H1 (cell line): ENCODE measurements at regions of chr20 and their contacts with region 1.

Region 1: DNA sequence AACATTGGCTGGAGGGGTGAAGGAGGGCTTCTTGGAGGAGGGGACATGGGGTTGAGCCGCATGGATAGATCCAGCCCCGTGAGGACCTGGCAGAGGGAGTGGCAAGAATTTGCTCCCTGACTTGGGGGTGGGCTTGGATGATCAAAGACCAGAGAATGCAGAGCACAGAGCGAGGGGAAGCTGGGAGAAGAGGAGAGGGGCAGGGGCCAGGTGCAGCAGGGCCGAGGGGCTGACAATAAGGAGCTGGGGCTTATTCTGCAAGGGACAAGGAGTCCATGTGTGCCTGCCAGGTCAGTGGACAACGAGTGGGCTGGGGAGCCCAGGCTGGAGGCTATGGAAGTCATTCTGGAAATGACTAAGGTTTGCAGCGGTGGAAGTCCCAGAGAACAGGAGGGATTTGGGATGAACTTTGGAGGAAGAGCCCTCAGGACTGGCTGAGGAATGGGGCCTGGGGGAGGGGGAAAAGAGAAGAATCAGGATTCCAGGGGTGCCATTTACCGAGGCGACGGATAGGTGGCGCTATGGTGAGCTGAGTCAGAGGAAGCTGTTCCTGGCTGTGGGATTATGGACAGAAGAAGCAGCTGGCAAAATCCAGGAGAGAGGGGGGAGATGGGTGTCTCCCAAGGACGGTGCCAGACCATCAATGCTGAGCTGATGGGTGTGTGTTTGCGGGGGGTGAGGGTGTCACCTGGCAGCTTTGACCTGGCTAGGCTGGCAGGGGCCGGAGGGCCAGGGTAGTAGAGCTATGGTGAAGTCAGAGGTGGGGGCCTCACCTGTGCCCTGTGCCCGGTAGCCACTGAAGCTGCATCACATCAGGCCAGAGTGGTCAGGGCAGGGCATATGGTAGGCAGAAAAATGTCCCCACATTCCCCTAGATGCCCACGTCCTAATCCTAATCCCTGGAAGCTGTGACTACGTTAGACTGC is 7.8 kb downstream of the KCNG1 start:
- DNase-seq: peak in 1 of 2 experiments; percentile 93
- H3K4me3 ChIP-seq: no peak overlapping the region; a peak in 1 of 8 replicates
- H3K27ac ChIP-seq: no peak overlapping the region
- H3K4me1 ChIP-seq: peaks cover 3 to 19% (median 9%) of the 10 kb centered on the region in 4 experiments
- H3K27me3 ChIP-seq: no peaks in the 10 kb centered on the region
- CTCF ChIP-seq: peak; percentile 76 to 96 (median 93)
- EP300 ChIP-seq: no peak
- POLR2A ChIP-seq: no peak
- RAD21 ChIP-seq: peak; percentile 72 to 75

Region 2: GRCh38 chr20:50992733-50993457 is 22.2 kb before region 1 on chr20:
- CTCF ChIA-PET with region 1: interaction called, 28 read pairs
- POLR2A ChIA-PET with region 1: interaction called, 4 read pairs
- DNase-seq: peak; percentile 66 to 82
- H3K4me3 ChIP-seq: peak overlapping the region in 3 of 4 experiments; percentile 8 to 40 (median 16); a peak in 4 of 8 replicates
- H3K27ac ChIP-seq: peak overlapping the region; percentile 44; the same call in 1 of the 2 replicates
- H3K4me1 ChIP-seq: peaks cover 3 to 19% (median 8%) of the 10 kb centered on the region in 4 experiments; a peak in 6 of 7 replicates
- H3K27me3 ChIP-seq: peaks cover 0 to 2% (median 0%) of the 10 kb centered on the region in 4 experiments; a peak in 1 of 7 replicates
- CTCF ChIP-seq: peak in 2 of 3 experiments; percentile 73 to 96; a peak in 3 of 4 replicates
- EP300 ChIP-seq: no peak
- POLR2A ChIP-seq: no peak
- RAD21 ChIP-seq: peak; percentile 89

Region 3: DNA sequence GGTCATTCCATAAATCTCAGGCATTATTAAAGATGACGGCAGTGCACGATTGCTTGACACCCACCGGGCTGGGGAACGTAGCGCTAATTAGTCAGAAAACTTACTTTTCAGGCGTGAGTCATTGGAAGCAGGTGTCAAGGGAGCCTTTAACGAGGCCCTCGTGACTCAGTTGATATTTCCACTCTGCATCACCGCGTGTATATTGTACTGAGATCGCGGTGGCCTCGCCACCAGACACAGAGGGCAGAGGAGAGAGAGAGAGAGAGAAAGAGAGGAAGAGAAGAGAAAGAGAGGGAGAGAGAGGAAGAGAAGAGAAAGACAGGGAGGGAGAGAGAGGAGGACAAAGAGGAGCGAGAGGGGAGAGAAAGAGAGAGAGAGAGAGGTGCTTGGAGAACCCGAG is 13.3 kb before region 1 on chr20:
- CTCF ChIA-PET with region 1: interaction called, 15 read pairs
- POLR2A ChIA-PET with region 1: interaction called, 3 read pairs
- DNase-seq: no peak
- H3K4me3 ChIP-seq: no peak overlapping the region
- H3K27ac ChIP-seq: no peak overlapping the region
- H3K4me1 ChIP-seq: no peaks in the 10 kb centered on the region
- H3K27me3 ChIP-seq: peaks cover 0 to 2% (median 0%) of the 10 kb centered on the region in 4 experiments; a peak in 2 of 7 replicates
- CTCF ChIP-seq: no peak
- EP300 ChIP-seq: no peak
- POLR2A ChIP-seq: no peak
- RAD21 ChIP-seq: no peak

Region 4: DNA sequence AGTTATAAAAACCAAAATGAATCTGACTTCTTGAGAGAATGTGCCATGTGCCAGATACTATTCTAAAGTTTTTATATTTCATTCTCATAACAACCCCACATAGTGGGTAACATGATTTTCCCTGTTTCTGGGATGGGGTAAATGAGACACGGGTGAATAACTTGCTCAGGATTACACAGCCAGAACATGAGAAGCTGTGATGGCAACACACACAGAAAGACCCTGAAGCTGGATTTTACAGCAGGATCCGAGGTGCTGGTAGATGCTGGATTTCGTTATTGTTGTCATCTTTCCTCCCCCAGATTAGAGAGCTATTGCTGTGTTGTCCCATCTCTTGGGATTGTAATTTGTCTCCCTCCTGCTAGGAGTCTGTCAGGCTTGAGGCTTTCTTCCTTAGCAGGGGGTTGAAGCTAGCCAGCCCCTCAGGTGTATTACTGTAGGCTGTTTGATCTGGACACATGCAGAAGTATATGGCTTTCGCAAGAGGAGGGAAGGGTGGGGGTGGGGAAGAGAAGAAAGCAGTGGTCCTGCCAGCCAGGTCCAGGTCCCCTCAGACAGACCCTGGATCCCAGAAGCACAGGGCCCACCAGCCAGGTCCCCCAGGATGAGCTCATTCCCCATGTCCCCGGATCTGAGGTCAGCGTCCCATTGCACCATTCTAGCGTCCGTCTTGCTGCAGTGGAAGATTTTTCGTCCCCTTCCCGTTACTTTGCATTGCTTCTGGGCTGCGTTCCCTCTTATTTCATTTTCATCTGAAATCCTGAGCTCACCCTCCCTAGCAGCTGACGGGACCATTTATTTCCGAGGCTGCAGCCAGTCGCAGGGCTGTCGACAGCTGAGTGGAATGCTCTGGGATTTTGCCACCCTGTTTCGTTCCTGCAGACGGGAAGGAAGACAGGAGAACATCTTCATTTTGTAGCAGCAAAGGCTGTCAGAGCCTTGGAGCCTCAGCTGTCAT is 15.2 kb after region 1 on chr20:
- CTCF ChIA-PET with region 1: interaction called, 23 read pairs
- POLR2A ChIA-PET with region 1: interaction called, 3 read pairs
- DNase-seq: no peak
- H3K4me3 ChIP-seq: no peak overlapping the region
- H3K27ac ChIP-seq: no peak overlapping the region
- H3K4me1 ChIP-seq: 0 out of 7 replicates have a peak, but pooled peaks cover 0 to 2% (median 0%) of the 10 kb centered on the region in 4 experiments
- H3K27me3 ChIP-seq: peaks cover 0 to 7% (median 4%) of the 10 kb centered on the region in 4 experiments; a peak in 3 of 7 replicates
- CTCF ChIP-seq: no peak
- EP300 ChIP-seq: no peak
- POLR2A ChIP-seq: no peak
- RAD21 ChIP-seq: no peak

Region 5: DNA sequence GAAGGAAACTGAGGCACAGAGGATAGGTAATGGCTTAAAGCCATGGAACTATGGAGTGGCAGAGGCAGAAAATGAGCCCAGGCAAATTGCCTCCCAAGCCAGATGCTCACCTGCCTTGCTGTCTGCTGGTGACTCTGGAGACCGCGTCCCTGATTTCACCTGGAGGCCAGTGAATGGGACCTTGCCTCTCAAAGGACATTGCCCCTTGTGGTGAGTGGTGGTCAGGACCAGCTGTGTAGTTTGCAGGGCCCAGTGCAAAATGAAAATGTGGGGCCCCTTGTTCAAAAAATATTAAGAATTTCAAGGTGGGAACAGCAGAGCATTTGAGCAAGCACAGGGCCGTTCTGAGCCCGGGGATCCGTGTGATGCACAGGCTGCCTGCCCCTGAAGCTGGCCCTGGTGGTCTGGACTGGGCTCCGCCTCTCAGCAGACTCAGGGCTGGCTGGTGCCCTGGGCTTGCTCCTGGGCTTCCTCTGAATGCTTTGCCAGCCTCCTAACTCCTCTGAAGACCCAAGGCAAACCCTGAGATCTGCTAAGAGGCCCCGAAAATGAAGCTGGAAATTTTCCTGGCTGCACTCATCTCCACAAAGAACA is 27.7 kb after region 1 on chr20:
- CTCF ChIA-PET with region 1: interaction called, 40 read pairs
- POLR2A ChIA-PET with region 1: no interaction called
- DNase-seq: peak in 1 of 2 experiments; percentile 60
- H3K4me3 ChIP-seq: no peak overlapping the region
- H3K27ac ChIP-seq: no peak overlapping the region
- H3K4me1 ChIP-seq: no peaks in the 10 kb centered on the region; a peak in 1 of 7 replicates
- H3K27me3 ChIP-seq: no peaks in the 10 kb centered on the region
- CTCF ChIP-seq: peak; percentile 66 to 69 (median 66)
- EP300 ChIP-seq: no peak
- POLR2A ChIP-seq: no peak
- RAD21 ChIP-seq: peak; percentile 48 to 60

Region 6: GRCh38 chr20:51326201-51326819 is 311.2 kb after region 1 on chr20:
- CTCF ChIA-PET with region 1: interaction called, 15 read pairs
- POLR2A ChIA-PET with region 1: no interaction called
- DNase-seq: peak in 1 of 2 experiments; percentile 79
- H3K4me3 ChIP-seq: no peak overlapping the region
- H3K27ac ChIP-seq: no peak overlapping the region
- H3K4me1 ChIP-seq: peaks cover 0 to 4% (median 1%) of the 10 kb centered on the region in 4 experiments; a peak in 3 of 7 replicates
- H3K27me3 ChIP-seq: no peaks in the 10 kb centered on the region; a peak in 1 of 7 replicates
- CTCF ChIP-seq: peak; percentile 74 to 92 (median 74)
- EP300 ChIP-seq: no peak
- POLR2A ChIP-seq: no peak
- RAD21 ChIP-seq: peak; percentile 70 to 83